ENCODE measurements at regions of chr12 and their contacts with region 1.

Region 1: GRCh38 chr12:131949431-131950181 is at the start of gene EP400:
- DNase-seq: peak; percentile 99
- CTCF ChIP-seq: peak; percentile 93

Region 2: GRCh38 chr12:131836193-131836592 is 113.4 kb before region 1 on chr12:
- CTCF ChIA-PET with region 1: interaction called, 15 read pairs
- POLR2A ChIA-PET with region 1: interaction called, 4 read pairs
- DNase-seq: no peak
- CTCF ChIP-seq: peak; percentile 45

Region 3: GRCh38 chr12:131939007-131939406 is 10.6 kb before region 1 on chr12:
- CTCF ChIA-PET with region 1: no interaction called
- POLR2A ChIA-PET with region 1: no interaction called
- DNase-seq: no peak
- CTCF ChIP-seq: no peak